Activated CD8-positive, alpha-beta memory T cell treated with anti-CD3 and anti-CD28 coated beads, Interleukin-2, amount 10 ng/mL, durations not matched to agents 7 days and 5 days (primary cell): ENCODE measurements at regions of chr1 and their contacts with region 1.

Region 1: DNA sequence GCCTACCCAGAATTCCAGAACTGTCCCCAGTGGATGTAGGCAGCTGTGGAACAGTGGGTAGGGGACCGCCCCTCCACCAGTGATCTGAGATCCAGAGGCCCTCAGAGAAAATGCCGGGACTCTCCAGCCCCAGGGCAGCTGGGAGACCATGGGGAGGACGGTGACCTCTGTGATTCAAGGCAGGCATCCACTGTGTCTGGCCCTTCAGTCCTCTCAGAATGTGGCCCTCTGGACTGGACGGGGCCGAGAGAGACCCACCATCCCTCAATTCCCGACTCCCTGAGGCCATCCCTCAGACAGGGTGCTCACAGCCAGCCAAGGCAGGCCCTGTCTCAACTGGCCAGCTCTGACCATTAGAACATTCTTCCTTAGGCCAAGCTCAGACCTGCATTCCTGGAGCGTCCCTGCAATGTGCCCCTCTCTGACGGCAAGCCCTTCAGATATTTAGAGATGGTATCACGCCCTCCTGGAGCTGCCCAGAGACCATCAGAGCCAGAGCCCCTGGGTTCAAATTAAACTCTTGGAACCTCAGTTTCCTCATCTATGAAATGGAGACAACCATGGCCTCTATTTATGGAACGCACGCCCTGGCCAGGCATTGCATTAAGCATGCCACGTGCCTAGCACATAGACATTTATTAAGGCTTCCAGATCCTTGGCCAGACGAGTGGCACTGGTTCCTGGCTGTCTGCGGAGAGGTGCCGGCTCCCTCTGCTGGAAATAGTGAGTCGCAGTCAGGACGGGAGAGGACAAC is 9.6 kb upstream of the EPS8L3 start:
- DNase-seq: peak; percentile 87
- ATAC-seq: peak; percentile 88
- H3K4me3 Mint-ChIP-seq: no peak overlapping the region
- H3K27ac Mint-ChIP-seq: no peak overlapping the region
- H3K4me1 Mint-ChIP-seq: peaks cover 8% of the 10 kb centered on the region
- H3K27me3 Mint-ChIP-seq: peaks cover 3% of the 10 kb centered on the region

Region 2: GRCh38 chr1:109548321-109549267 is 224.7 kb before region 1 on chr1 and contains the start of gene GNAI3:
- CTCF ChIA-PET with region 1: interaction called, 41 read pairs
- DNase-seq: peak; percentile 99
- ATAC-seq: peak; percentile 94
- H3K4me3 Mint-ChIP-seq: peak within 1 kb of the TSS; percentile 95
- H3K27ac Mint-ChIP-seq: peak within 1 kb of the TSS; percentile 98
- H3K4me1 Mint-ChIP-seq: peaks cover 35% of the 10 kb centered on the region
- H3K27me3 Mint-ChIP-seq: no peaks in the 10 kb centered on the region
- total RNA-seq, gene GNAI3: 7.5 to 8.3 TPM

Region 3: GRCh38 chr1:109687616-109688499 is 85.5 kb before region 1 on chr1 and contains the start of gene GSTM1:
- CTCF ChIA-PET with region 1: no interaction called
- DNase-seq: no peak
- ATAC-seq: no peak
- H3K4me3 Mint-ChIP-seq: no peak within 1 kb of the TSS
- H3K27ac Mint-ChIP-seq: no peak within 1 kb of the TSS
- H3K4me1 Mint-ChIP-seq: no peaks in the 10 kb centered on the region
- H3K27me3 Mint-ChIP-seq: no peaks in the 10 kb centered on the region
- total RNA-seq, gene GSTM1: not detected

Region 4: DNA sequence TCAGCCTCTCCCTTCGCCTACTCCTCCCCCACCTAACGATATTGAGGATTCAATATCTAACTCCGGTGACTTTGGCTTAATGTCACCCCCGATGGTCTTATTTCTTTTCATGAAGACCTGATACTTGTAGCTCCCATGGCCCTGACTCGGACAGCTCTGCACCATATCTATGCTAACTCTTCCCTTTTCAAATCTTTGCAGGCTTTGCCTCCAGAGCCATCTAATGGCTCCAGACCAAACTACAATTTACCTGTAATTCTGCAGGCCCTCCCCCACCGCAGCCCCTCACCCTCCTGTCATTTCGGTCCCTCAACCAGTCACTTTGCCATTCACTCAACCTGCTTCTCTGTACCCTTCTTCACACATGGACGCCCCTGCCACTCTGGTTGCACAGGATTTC is 69.2 kb before region 1 on chr1:
- CTCF ChIA-PET with region 1: no interaction called
- DNase-seq: no peak
- ATAC-seq: no peak
- H3K4me3 Mint-ChIP-seq: no peak overlapping the region
- H3K27ac Mint-ChIP-seq: no peak overlapping the region
- H3K4me1 Mint-ChIP-seq: no peaks in the 10 kb centered on the region
- H3K27me3 Mint-ChIP-seq: peaks cover 14% of the 10 kb centered on the region

Region 5: GRCh38 chr1:109790735-109791494 is 17.6 kb after region 1 on chr1:
- CTCF ChIA-PET with region 1: interaction called, 132 read pairs
- DNase-seq: peak; percentile 96
- ATAC-seq: peak; percentile 95
- H3K4me3 Mint-ChIP-seq: peak overlapping the region; percentile 42
- H3K27ac Mint-ChIP-seq: peak overlapping the region; percentile 96
- H3K4me1 Mint-ChIP-seq: peaks cover 94% of the 10 kb centered on the region
- H3K27me3 Mint-ChIP-seq: no peaks in the 10 kb centered on the region

Region 6: DNA sequence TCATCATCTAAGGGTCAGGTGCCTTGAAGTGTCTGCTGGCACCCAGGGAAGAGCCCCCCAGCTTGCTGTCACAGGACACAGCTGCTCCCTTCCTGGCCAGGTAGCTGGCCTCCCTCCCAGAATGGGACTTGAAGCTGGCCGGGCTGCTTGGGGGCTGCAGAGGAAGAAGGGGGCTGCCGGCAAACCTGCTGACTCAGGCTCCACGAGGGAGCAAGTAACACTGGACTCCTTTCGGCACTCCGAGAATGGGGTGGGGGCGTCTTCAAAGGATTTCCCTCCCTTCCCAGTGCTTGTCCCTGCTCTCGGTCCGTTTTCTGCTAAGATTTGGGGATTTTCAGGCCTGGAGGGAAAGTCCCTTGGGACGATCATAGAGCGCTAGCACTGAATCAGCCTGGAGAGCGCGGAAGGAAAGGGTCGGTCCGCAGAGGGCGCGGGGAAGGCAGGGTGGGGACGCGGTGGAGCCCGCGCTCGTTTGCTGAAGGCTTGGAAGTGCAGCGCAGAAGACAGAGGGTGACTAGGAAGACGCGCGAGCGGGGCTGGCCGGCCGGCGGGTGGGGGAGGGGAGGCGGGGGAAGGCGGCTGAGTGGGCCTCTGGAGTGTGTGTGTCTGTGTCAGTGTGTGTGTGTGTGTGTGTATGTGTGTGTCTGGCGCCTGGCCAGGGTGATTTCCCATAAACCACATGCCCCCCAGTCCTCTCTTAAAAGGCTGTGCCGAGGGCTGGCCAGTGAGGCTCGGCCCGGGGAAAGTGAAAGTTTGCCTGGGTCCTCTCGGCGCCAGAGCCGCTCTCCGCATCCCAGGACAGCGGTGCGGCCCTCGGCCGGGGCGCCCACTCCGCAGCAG is 137.0 kb after region 1 on chr1 and contains the start of gene CSF1:
- CTCF ChIA-PET with region 1: interaction called, 15 read pairs
- DNase-seq: peak; percentile 79
- ATAC-seq: peak; percentile 50
- H3K4me3 Mint-ChIP-seq: peak within 1 kb of the TSS; percentile 91
- H3K27ac Mint-ChIP-seq: peak within 1 kb of the TSS; percentile 91
- H3K4me1 Mint-ChIP-seq: peaks cover 83% of the 10 kb centered on the region
- H3K27me3 Mint-ChIP-seq: no peaks in the 10 kb centered on the region
- total RNA-seq, gene CSF1: 77.6 to 143 TPM

Region 7: DNA sequence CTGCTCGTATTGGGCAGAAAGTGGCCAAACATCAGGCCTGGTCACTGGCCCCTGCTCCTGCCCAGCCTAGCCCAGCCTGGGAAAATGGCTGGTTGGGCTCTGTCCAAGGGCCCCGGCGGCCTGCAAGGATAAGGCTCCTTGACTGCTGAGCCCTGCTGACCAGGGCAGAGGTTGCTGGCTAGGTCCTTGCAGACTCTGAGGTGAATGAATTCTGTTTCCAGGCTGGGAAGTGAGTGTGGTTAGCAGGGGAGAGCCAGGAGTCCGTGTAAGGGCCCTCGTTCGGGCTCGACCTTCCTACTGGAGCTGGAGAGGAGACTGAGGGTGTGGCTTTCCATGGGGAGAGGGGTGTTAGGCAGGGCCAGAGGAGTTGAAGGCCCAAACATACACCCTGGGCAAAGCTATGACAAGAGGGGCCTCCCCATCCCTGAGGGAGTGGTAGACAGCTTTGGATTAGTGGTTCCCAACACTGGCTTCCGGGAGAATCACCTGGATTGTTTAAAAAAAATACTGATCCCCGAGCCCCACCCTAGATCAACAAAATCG is 157.9 kb after region 1 on chr1:
- CTCF ChIA-PET with region 1: interaction called, 10 read pairs
- DNase-seq: peak; percentile 33
- ATAC-seq: no peak
- H3K4me3 Mint-ChIP-seq: no peak overlapping the region
- H3K27ac Mint-ChIP-seq: no peak overlapping the region
- H3K4me1 Mint-ChIP-seq: peaks cover 24% of the 10 kb centered on the region
- H3K27me3 Mint-ChIP-seq: peaks cover 10% of the 10 kb centered on the region

Region 8: DNA sequence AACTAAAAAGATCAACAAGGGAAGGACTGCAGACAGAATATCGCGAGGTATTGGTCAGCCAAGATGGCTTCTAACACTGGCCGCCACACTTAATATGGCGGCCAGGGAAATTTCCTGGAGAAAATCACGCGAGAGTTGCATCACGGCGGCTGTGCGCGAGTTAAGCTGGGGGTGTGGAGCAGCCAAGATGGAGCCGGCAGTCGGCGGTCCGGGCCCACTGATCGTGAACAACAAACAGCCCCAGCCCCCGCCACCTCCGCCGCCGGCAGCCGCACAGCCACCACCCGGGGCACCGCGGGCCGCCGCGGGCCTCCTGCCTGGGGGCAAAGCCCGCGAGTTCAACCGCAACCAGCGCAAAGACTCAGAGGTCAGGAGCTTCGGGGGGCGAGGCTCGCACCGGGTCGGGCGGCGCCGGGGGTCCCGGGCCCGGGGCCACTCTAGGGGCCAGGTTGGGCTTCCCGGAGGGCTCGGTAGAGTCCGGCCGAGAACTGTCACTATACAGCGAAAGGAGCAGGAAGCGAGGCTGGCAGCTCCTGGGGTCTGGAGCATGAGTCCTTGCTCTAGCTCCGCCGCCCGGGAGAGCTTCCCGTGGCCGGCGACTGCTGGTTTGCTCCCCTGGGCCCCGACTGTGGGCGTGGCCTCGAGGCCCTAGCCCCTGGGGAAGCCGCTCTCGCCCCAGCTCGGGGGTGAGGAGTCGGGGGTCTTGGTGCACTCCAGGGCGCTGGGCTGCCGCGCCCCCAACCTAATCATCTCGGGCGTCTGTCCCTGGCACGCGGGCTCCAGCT is 261.3 kb after region 1 on chr1 and contains the start of gene STRIP1:
- CTCF ChIA-PET with region 1: interaction called, 10 read pairs
- DNase-seq: peak; percentile 96
- ATAC-seq: peak; percentile 88
- H3K4me3 Mint-ChIP-seq: peak within 1 kb of the TSS; percentile 79
- H3K27ac Mint-ChIP-seq: peak within 1 kb of the TSS; percentile 95
- H3K4me1 Mint-ChIP-seq: peaks cover 54% of the 10 kb centered on the region
- H3K27me3 Mint-ChIP-seq: no peaks in the 10 kb centered on the region
- total RNA-seq, gene STRIP1: 40.4 to 40.8 TPM